A549 (cell line): ENCODE measurements at regions of chr5 and their contacts with region 1.

Region 1: GRCh38 chr5:177390363-177391300 is 6.4 kb downstream of the SLC34A1 start:
- DNase-seq: peak; percentile 87 to 98
- ATAC-seq: peak; percentile 81 to 94
- H3K4me3 ChIP-seq: no peak overlapping the region
- H3K27ac ChIP-seq: peak overlapping the region; percentile 44 to 72; a peak in 5 of 6 replicates
- H3K4me1 ChIP-seq: peaks cover 18% of the 10 kb centered on the region
- CTCF ChIP-seq: peak; percentile 97
- EP300 ChIP-seq: no peak
- POLR2A ChIP-seq: no peak
- RAD21 ChIP-seq: peak; percentile 89 to 92

Region 2: DNA sequence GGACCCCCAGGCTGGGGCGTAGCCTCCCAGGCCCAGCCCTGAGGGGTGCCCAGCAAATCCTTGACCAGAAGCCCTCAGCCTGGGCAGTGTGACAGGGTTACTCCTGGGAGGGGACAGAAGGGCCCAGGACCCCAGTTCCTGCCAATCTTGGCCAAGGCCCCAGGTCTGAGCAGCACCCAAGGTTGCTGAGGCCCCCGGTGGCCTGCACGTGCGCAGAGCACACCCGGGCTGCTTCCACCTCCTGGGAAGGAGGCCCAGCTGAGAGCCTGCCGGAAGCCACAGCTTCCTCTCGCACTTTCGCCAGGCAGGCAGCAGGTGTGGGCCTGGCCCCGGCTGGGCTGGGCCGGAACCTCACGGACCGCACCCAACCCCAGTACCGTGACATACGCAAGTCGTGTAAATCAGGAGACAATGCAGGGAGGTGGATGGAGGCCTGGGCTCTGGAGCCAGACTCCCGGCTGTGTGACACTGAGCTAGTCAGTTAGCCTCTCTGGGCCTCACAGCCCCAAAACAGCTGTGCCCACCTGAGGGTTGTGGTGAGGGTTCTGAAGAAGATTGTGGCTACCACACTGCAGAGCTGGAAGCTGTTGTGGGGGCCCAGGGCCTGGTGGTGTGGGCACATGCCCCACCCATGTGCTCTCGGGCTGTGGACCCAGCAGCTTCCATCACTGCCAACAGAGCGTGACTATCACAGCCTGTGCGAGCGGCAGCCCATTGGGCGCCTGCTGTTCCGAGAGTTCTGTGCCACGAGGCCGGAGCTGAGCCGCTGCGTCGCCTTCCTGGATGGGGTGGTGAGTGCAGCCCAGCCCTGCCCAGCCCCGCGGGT is 40.9 kb after region 1 on chr5:
- CTCF ChIA-PET with region 1: interaction called, 359 read pairs
- POLR2A ChIA-PET with region 1: no interaction called
- DNase-seq: no peak
- ATAC-seq: peak in 1 of 2 experiments; percentile 2; a peak in 2 of 6 replicates
- H3K4me3 ChIP-seq: no peak overlapping the region
- H3K27ac ChIP-seq: no peak overlapping the region
- H3K4me1 ChIP-seq: peaks cover 12% of the 10 kb centered on the region
- CTCF ChIP-seq: no peak
- EP300 ChIP-seq: no peak
- POLR2A ChIP-seq: no peak; the same call in 1 of the 2 replicates
- RAD21 ChIP-seq: no peak